PC-3 (cell line): ENCODE measurements at regions of chr11 and their contacts with region 1.

Region 1: GRCh38 chr11:720642-721246 is 14.7 kb downstream of the EPS8L2 start:
- DNase-seq: peak; percentile 41
- ATAC-seq: peak; percentile 45
- H3K4me3 ChIP-seq: no peak overlapping the region
- H3K27ac ChIP-seq: no peak overlapping the region
- H3K4me1 ChIP-seq: no peaks in the 10 kb centered on the region
- H3K27me3 ChIP-seq: no peaks in the 10 kb centered on the region
- CTCF ChIP-seq: no peak

Region 2: DNA sequence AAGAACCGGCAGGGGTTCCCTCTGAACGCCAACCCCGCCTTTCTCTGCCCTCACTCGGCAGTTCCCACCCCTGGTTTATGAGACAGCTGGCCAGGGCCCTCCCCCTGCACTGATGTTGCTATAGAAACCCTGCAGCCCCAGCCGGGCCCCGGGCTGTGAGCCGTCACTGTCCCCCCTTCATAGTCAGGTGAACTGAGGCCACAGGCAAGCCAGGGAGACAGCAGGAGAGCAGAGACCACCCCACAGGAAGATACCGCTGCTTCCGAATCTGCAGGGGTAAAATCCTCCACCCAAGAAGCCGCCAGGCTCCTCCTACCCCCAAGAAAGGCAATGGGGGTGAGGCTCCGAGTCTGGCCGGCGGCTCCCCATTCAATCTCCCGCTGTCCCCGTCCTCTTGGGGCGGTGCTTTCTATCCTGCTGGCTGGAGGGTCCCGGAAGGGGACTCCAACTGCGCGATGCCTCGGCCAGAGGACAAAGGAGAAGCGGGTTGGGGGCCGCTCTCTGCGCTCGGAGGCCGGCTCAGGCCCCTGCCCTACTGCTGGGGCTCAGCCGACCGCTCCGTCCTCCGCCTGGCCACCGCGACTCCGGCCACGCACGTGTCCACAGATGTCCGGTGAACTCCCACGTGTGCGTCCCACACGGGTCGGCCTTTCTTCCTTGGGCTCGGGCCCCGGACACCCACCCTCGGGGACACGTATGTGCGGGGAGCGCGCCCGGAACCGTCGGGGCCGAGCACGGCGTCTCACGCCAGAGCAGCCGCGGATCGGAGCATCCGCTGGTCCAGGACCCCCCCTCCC is 76.8 kb after region 1 on chr11:
- CTCF ChIA-PET with region 1: interaction called, 11 read pairs
- POLR2A ChIA-PET with region 1: no interaction called
- intact Hi-C with region 1: no loop called
- DNase-seq: peak; percentile 55
- ATAC-seq: peak; percentile 34
- H3K4me3 ChIP-seq: peak overlapping the region; percentile 94
- H3K27ac ChIP-seq: peak overlapping the region; percentile 48
- H3K4me1 ChIP-seq: peaks cover 19% of the 10 kb centered on the region
- H3K27me3 ChIP-seq: no peaks in the 10 kb centered on the region
- CTCF ChIP-seq: no peak